Activated CD8-positive, alpha-beta T cell treated with anti-CD3 and anti-CD28 coated beads, Interleukin-2, amount 10 ng/mL, durations not matched to agents 7 days and 5 days (primary cell): ENCODE measurements at regions of chr12 and their contacts with region 1.

Region 1: DNA sequence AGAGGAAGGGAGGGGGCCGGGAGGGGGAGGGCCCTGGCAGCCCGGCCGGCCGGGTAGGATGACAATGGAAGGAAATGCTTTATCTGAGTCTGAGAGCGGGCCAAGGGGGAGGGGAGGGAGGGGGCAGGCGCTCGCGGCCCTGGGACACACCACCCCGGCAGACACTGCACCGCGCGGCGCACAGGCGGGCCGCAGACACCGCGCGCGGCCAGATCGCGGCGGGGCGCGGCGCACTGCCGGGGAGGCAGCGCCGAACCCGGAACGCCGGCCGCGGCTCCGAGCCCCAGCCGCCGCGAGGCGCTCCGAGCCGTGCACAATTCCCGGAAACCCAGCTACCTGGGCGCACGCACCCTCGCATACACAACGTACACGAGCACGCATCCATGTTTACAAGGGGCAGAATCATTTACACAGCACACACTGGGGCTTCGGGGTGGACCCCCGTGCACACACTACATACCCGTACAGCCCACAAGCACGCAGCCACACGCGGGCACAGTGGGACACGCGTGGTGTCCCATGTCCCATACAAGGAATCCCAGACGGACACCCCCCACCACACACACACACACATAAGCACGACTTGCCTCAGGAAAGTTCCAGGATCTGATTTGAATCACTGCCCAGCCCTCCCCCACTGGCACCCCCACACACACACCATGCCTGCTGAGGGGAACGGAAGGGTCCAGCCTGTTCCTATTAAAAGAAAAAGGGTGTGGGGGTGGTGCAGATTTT is at the start of gene HDAC7:
- DNase-seq: peak; percentile 85
- ATAC-seq: peak; percentile 58
- H3K4me3 Mint-ChIP-seq: peak within 1 kb of the TSS; percentile 84
- H3K27ac Mint-ChIP-seq: peak within 1 kb of the TSS; percentile 91
- H3K4me1 Mint-ChIP-seq: peaks cover 76% of the 10 kb centered on the region
- H3K27me3 Mint-ChIP-seq: no peaks in the 10 kb centered on the region
- total RNA-seq, gene HDAC7: 180 to 207 TPM

Region 2: DNA sequence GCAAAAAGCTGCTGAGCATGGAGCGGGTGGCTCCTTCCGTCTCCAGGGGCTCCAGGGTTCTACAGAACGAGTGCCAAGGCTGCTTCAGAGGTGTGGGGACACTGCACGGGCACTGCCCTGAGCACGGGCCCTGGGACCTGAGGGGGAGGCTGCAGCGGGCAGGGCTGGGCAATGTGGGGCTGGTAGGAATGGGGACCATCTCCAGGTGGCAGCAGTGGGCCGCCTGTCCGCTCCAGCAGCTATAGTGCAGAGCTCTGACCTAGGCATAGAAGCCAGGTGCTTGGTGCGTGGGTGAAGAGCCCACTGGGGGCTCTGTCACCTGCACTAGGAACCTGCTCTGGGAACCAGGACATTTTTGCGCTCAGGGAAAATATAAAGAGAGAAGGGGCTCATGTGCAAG is 22.6 kb before region 1 on chr12:
- CTCF ChIA-PET with region 1: interaction called, 1,049 read pairs
- POLR2A ChIA-PET with region 1: interaction called, 272 read pairs
- DNase-seq: peak; percentile 57
- ATAC-seq: peak; percentile 73
- H3K4me3 Mint-ChIP-seq: no peak overlapping the region
- H3K27ac Mint-ChIP-seq: peak overlapping the region; percentile 83
- H3K4me1 Mint-ChIP-seq: peaks cover 47% of the 10 kb centered on the region
- H3K27me3 Mint-ChIP-seq: no peaks in the 10 kb centered on the region

Region 3: GRCh38 chr12:48029491-48030172 is 209.6 kb after region 1 on chr12:
- CTCF ChIA-PET with region 1: no interaction called
- POLR2A ChIA-PET with region 1: no interaction called
- DNase-seq: no peak
- ATAC-seq: no peak
- H3K4me3 Mint-ChIP-seq: no peak overlapping the region
- H3K27ac Mint-ChIP-seq: no peak overlapping the region
- H3K4me1 Mint-ChIP-seq: peaks cover 14% of the 10 kb centered on the region
- H3K27me3 Mint-ChIP-seq: peaks cover 16% of the 10 kb centered on the region

Region 4: DNA sequence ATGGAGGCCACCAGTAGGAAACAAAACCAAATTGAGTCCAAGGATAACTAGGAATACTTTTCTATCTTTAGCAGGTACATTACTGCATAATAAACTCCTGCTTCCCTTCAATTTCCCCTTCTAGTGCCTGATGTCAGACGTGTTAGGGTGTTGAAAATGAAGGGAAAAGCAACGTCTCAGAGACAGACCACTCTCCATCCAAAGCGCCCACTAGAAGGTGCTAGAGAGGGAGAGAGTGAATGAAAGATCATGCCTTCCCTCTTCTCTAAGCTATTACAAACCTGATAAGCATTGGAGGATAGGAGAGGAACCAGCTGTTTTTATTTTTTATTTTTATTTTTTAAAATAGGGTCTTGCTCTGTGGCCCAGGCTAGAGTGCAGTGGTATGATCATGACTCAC is 466.6 kb after region 1 on chr12:
- CTCF ChIA-PET with region 1: no interaction called
- POLR2A ChIA-PET with region 1: no interaction called
- DNase-seq: no peak
- ATAC-seq: peak; percentile 36
- H3K4me3 Mint-ChIP-seq: no peak overlapping the region
- H3K27ac Mint-ChIP-seq: peak overlapping the region; percentile 92
- H3K4me1 Mint-ChIP-seq: peaks cover 16% of the 10 kb centered on the region
- H3K27me3 Mint-ChIP-seq: peaks cover 10% of the 10 kb centered on the region